ENCODE measurements at regions of chr5 and their contacts with region 1.

Region 1: DNA sequence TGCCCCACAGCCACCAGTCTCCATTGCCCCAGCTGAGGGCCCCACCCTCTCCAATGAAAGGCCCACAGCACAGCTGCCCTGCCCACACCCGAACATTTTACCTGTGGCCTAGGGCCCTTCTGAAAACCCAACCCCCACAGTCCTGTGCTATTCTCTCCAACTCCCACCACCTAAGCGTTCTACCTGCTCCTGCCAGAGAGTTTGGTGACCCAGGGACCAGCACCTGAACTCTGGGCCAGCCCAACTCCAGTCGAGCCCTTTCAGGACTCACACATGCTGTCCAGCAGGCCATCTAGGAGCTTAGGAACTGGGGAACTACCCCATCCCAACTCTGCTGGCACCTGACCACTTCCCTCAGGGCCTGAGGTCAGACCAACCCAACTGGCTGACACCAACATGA is 562.3 kb downstream of the DNAH5 start:
- DNase-seq: no peak
- H3K4me3 ChIP-seq: no peak overlapping the region
- H3K27ac ChIP-seq: no peak overlapping the region
- H3K4me1 ChIP-seq: no peaks in the 10 kb centered on the region
- H3K27me3 ChIP-seq: no peaks in the 10 kb centered on the region
- CTCF ChIP-seq: no peak

Region 2: GRCh38 chr5:13133951-13134350 is 248.3 kb before region 1 on chr5:
- CTCF ChIA-PET with region 1: no interaction called
- dilution Hi-C with region 1: no loop called
- in situ Hi-C with region 1: no loop called
- intact Hi-C with region 1: no loop called
- DNase-seq: no peak
- H3K4me3 ChIP-seq: no peak overlapping the region
- H3K27ac ChIP-seq: no peak overlapping the region
- H3K4me1 ChIP-seq: no peaks in the 10 kb centered on the region
- H3K27me3 ChIP-seq: no peaks in the 10 kb centered on the region
- CTCF ChIP-seq: no peak

Region 3: DNA sequence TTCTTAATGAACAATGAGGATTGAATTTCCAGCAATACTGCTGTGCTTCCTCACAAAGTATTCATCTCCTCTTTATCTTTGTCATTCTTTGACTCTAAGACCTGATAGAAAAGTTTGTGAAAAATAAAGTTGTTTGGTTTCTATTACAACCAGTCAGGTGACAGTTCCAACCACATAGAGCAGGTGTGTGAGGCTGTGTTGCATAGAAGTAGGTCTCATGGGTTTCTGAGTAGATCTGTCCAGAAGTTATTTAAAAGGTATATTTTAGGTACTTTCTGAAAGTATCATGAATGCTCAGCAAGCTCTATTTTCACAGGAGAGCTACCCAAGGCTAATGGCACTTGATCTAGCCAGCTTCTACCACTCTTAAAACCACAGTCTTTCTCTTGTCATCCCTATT is 74.8 kb before region 1 on chr5:
- CTCF ChIA-PET with region 1: no interaction called
- dilution Hi-C with region 1: loop called (anchors 5 kb)
- in situ Hi-C with region 1: no loop called
- intact Hi-C with region 1: no loop called
- DNase-seq: no peak
- H3K4me3 ChIP-seq: no peak overlapping the region
- H3K27ac ChIP-seq: no peak overlapping the region
- H3K4me1 ChIP-seq: no peaks in the 10 kb centered on the region
- H3K27me3 ChIP-seq: peaks cover 2% of the 10 kb centered on the region
- CTCF ChIP-seq: no peak

Region 4: GRCh38 chr5:13408616-13409015 is 26.4 kb after region 1 on chr5:
- CTCF ChIA-PET with region 1: no interaction called
- dilution Hi-C with region 1: no loop called
- in situ Hi-C with region 1: no loop called
- intact Hi-C with region 1: no loop called
- DNase-seq: peak; percentile 50
- H3K4me3 ChIP-seq: no peak overlapping the region
- H3K27ac ChIP-seq: no peak overlapping the region
- H3K4me1 ChIP-seq: peaks cover 6% of the 10 kb centered on the region
- H3K27me3 ChIP-seq: no peaks in the 10 kb centered on the region
- CTCF ChIP-seq: no peak

Measured in mammary epithelial cell (primary cell).